ENCODE measurements at regions of chr10 and their contacts with region 1.

Region 1: GRCh38 chr10:93482145-93482834 is at the start of gene MYOF:
- DNase-seq: peak in 7 of 9 donors; percentile 45 to 72 (median 64)
- ATAC-seq: peak; percentile 94
- H3K4me3 ChIP-seq: peak within 1 kb of the TSS; percentile 67
- H3K4me3 Mint-ChIP-seq: peak within 1 kb of the TSS; percentile 81 to 95 (median 84)
- H3K27ac ChIP-seq: no peak within 1 kb of the TSS
- H3K27ac Mint-ChIP-seq: peak within 1 kb of the TSS in 3 of 9 donors; percentile 1 to 65 (median 6)
- H3K4me1 ChIP-seq: peaks cover 5 to 6% of the 10 kb centered on the region in 2 donors
- H3K4me1 Mint-ChIP-seq: peaks cover 5 to 19% (median 11%) of the 10 kb centered on the region in 7 donors
- H3K27me3 ChIP-seq: peaks cover 3 to 9% of the 10 kb centered on the region in 2 donors
- H3K27me3 Mint-ChIP-seq: peaks cover 0 to 36% (median 25%) of the 10 kb centered on the region in 5 donors
- total RNA-seq, gene MYOF: 0.57 to 31.2 (median 1.5) TPM

Region 2: GRCh38 chr10:93115661-93116383 is 366.5 kb before region 1 on chr10:
- CTCF ChIA-PET with region 1: no interaction called
- POLR2A ChIA-PET with region 1: no interaction called
- intact Hi-C with region 1: loop called in 1 of 2 experiments (anchors 2 kb)
- DNase-seq: peak; percentile 51 to 77 (median 69)
- ATAC-seq: peak; percentile 82
- H3K4me3 ChIP-seq: no peak overlapping the region
- H3K4me3 Mint-ChIP-seq: peak overlapping the region in 5 of 10 donors; percentile 21 to 57 (median 41)
- H3K27ac ChIP-seq: no peak overlapping the region
- H3K27ac Mint-ChIP-seq: peak overlapping the region in 8 of 9 donors; percentile 12 to 80 (median 44)
- H3K4me1 ChIP-seq: peaks cover 4 to 15% of the 10 kb centered on the region in 2 donors
- H3K4me1 Mint-ChIP-seq: peaks cover 0 to 50% (median 17%) of the 10 kb centered on the region in 7 donors
- H3K27me3 ChIP-seq: no peaks in the 10 kb centered on the region
- H3K27me3 Mint-ChIP-seq: peaks cover 0 to 27% (median 9%) of the 10 kb centered on the region in 5 donors

Region 3: GRCh38 chr10:93376372-93377293 is 105.7 kb before region 1 on chr10:
- CTCF ChIA-PET with region 1: interaction called, 309 read pairs
- POLR2A ChIA-PET with region 1: interaction called, 9 read pairs
- intact Hi-C with region 1: loop called (anchors 1 kb)
- DNase-seq: peak in 8 of 9 donors; percentile 37 to 78 (median 68)
- ATAC-seq: peak; percentile 89
- H3K4me3 ChIP-seq: no peak overlapping the region
- H3K4me3 Mint-ChIP-seq: no peak overlapping the region
- H3K27ac ChIP-seq: no peak overlapping the region
- H3K27ac Mint-ChIP-seq: no peak overlapping the region
- H3K4me1 ChIP-seq: peaks cover 0 to 4% of the 10 kb centered on the region in 2 donors
- H3K4me1 Mint-ChIP-seq: peaks cover 0 to 23% (median 0%) of the 10 kb centered on the region in 7 donors
- H3K27me3 ChIP-seq: no peaks in the 10 kb centered on the region
- H3K27me3 Mint-ChIP-seq: peaks cover 0 to 10% (median 3%) of the 10 kb centered on the region in 5 donors

Region 4: GRCh38 chr10:93413252-93413689 is 69.0 kb before region 1 on chr10:
- CTCF ChIA-PET with region 1: interaction called, 8 read pairs
- POLR2A ChIA-PET with region 1: interaction called, 5 read pairs
- intact Hi-C with region 1: loop called in 1 of 2 experiments (anchors 2 kb)
- DNase-seq: peak in 8 of 9 donors; percentile 28 to 77 (median 70)
- ATAC-seq: peak; percentile 86
- H3K4me3 ChIP-seq: peak overlapping the region; percentile 7
- H3K4me3 Mint-ChIP-seq: peak overlapping the region; percentile 48 to 81 (median 72)
- H3K27ac ChIP-seq: peak overlapping the region; percentile 4
- H3K27ac Mint-ChIP-seq: peak overlapping the region; percentile 81 to 94 (median 89)
- H3K4me1 ChIP-seq: peaks cover 26 to 66% of the 10 kb centered on the region in 2 donors
- H3K4me1 Mint-ChIP-seq: peaks cover 48 to 83% (median 76%) of the 10 kb centered on the region in 7 donors
- H3K27me3 ChIP-seq: no peaks in the 10 kb centered on the region
- H3K27me3 Mint-ChIP-seq: no peaks in the 10 kb centered on the region